ENCODE measurements at regions of chr3 and their contacts with region 1.

Region 1: GRCh38 chr3:170961616-170962400 is 53.4 kb upstream of the EIF5A2 start:
- DNase-seq: no peak
- ATAC-seq: 0 out of 3 replicates have a peak, but pooled peaks have one; percentile 30
- H3K4me3 ChIP-seq: no peak overlapping the region
- H3K27ac ChIP-seq: no peak overlapping the region
- H3K4me1 ChIP-seq: no peaks in the 10 kb centered on the region
- H3K27me3 ChIP-seq: no peaks in the 10 kb centered on the region; a peak in 1 of 4 replicates
- CTCF ChIP-seq: peak; percentile 31 to 64 (median 43); a peak in 5 of 6 replicates
- EP300 ChIP-seq: no peak
- POLR2A ChIP-seq: no peak
- RAD21 ChIP-seq: peak; percentile 73

Region 2: GRCh38 chr3:170977911-170978310 is 16.1 kb after region 1 on chr3:
- CTCF ChIA-PET with region 1: interaction called, 4 read pairs
- POLR2A ChIA-PET with region 1: no interaction called
- RAD21 ChIA-PET with region 1: interaction called, 3 read pairs
- SMC1A ChIA-PET with region 1: interaction called, 16 read pairs
- in situ Hi-C with region 1: no loop called
- intact Hi-C with region 1: no loop called
- DNase-seq: no peak
- ATAC-seq: no peak
- H3K4me3 ChIP-seq: no peak overlapping the region
- H3K27ac ChIP-seq: no peak overlapping the region
- H3K4me1 ChIP-seq: no peaks in the 10 kb centered on the region
- H3K27me3 ChIP-seq: no peaks in the 10 kb centered on the region; a peak in 2 of 4 replicates
- CTCF ChIP-seq: no peak
- EP300 ChIP-seq: no peak
- POLR2A ChIP-seq: no peak
- RAD21 ChIP-seq: no peak

Region 3: DNA sequence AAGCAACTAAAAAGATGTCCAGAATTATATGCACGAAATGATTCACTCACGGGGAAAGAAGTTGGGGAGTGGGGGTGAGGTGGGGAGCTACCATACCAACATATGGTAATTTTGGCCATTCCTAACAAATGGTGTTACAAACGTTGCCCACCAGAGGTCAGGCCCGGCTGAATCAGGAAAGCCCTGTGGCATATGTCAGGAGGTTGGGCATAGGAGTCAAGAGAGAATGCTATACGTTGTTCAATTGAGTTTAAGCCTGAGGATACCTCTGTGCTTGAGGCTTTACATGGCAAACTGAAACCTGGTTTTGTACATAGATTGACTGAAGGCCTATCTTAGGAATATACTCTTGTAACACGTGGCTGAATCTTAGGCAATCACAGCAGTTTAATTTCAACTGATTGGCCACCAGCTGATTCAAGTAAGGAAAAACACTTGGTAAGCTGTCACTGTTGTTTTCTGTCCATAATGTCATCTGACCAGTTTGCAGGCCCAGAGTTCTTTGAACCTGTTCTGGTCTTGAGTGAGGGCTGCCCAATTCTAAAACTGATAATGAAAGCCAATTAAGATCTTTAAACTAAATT is 88.1 kb after region 1 on chr3:
- CTCF ChIA-PET with region 1: interaction called, 17 read pairs
- POLR2A ChIA-PET with region 1: no interaction called
- RAD21 ChIA-PET with region 1: interaction called, 8 read pairs
- SMC1A ChIA-PET with region 1: interaction called, 10 read pairs
- in situ Hi-C with region 1: no loop called
- intact Hi-C with region 1: loop called (anchors 1 kb)
- DNase-seq: peak; percentile 34
- ATAC-seq: peak; percentile 91
- H3K4me3 ChIP-seq: no peak overlapping the region
- H3K27ac ChIP-seq: no peak overlapping the region
- H3K4me1 ChIP-seq: no peaks in the 10 kb centered on the region
- H3K27me3 ChIP-seq: no peaks in the 10 kb centered on the region
- CTCF ChIP-seq: peak; percentile 65 to 81 (median 72)
- EP300 ChIP-seq: no peak
- POLR2A ChIP-seq: no peak
- RAD21 ChIP-seq: peak; percentile 87

Region 4: DNA sequence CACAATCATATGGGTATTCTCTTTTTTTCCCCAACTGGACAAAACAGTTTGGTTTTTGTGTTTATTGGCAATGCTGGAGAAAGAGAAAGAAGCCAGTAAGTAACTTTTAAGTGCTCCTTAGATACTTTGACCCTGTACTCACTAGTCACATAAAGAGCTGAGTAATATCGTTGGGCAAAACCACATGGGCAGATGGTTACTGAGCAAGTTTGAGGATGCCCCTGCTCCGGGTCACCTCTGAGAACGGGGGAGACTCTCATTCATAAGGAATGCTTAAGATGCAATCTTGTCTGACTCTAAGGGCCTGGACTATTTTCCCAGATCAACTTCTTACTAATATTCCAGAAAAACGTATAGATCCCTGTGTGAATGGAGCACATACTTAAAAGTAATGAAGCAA is 171.1 kb after region 1 on chr3:
- CTCF ChIA-PET with region 1: no interaction called
- POLR2A ChIA-PET with region 1: no interaction called
- RAD21 ChIA-PET with region 1: no interaction called
- SMC1A ChIA-PET with region 1: no interaction called
- in situ Hi-C with region 1: no loop called
- intact Hi-C with region 1: loop called (anchors 10 kb)
- DNase-seq: no peak
- ATAC-seq: no peak
- H3K4me3 ChIP-seq: no peak overlapping the region
- H3K27ac ChIP-seq: no peak overlapping the region
- H3K4me1 ChIP-seq: no peaks in the 10 kb centered on the region
- H3K27me3 ChIP-seq: no peaks in the 10 kb centered on the region
- CTCF ChIP-seq: no peak
- EP300 ChIP-seq: no peak
- POLR2A ChIP-seq: no peak
- RAD21 ChIP-seq: no peak

Region 5: DNA sequence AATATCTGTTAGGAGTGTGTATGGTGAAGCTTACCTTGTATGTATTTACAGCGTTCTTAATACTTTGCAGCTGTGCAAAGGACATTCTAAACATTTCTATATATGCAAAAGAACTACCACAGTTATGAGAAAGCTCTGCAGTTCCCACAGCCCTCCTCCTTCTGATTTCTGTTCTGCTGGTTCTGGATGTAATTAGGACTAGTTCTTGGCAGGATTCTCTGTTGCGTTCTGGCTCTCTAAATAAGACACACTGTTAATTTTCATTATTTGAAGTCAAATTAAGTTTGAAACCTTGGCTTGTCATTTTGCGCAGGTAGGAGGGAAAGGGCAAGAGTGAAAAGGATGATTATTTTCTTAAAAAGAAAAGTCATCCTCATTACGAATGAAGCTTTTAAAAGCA is 1154.0 kb after region 1 on chr3:
- CTCF ChIA-PET with region 1: no interaction called
- POLR2A ChIA-PET with region 1: no interaction called
- RAD21 ChIA-PET with region 1: no interaction called
- SMC1A ChIA-PET with region 1: no interaction called
- in situ Hi-C with region 1: no loop called
- intact Hi-C with region 1: no loop called
- DNase-seq: no peak
- ATAC-seq: no peak
- H3K4me3 ChIP-seq: no peak overlapping the region
- H3K27ac ChIP-seq: no peak overlapping the region
- H3K4me1 ChIP-seq: no peaks in the 10 kb centered on the region
- H3K27me3 ChIP-seq: no peaks in the 10 kb centered on the region
- CTCF ChIP-seq: no peak
- EP300 ChIP-seq: no peak
- POLR2A ChIP-seq: no peak
- RAD21 ChIP-seq: no peak

Measured in GM12878 (cell line).